Activated CD8-positive, alpha-beta T cell treated with anti-CD3 and anti-CD28 coated beads, Interleukin-2, amount 10 ng/mL, durations not matched to agents 7 days and 5 days (primary cell): ENCODE measurements at regions of chr1 and their contacts with region 1.

Region 1: DNA sequence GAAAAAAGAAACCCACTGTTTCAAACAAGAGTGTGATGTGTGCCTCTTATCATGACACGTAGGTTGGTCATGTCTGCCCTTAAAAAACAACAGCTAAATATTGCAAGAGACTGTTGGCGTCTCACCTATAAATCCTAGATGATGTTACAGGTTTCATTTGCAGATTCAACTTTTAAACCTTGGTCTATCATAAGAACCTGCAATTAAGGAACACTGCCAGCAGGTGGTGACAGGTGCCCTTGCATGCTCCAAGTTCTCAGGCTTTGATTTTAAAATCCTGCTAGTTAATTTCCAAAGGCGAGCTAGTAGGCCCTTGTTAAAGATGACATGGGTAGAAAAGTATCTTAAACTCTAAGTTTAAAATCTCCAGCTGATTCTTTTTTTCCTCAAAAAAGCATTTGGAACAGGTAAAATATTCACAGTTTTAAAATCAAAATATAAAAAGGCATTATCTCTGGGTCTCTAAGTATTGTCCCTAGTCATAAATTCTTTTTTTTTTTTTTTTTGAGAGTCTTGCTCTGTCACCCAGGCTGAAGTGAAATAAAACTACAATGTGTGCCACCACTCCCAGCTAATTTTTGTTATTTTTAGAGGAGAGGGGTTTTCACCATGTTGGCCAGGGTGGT is 39.1 kb downstream of the CLSTN1 start:
- DNase-seq: peak; percentile 83
- ATAC-seq: peak; percentile 53
- H3K4me3 Mint-ChIP-seq: no peak overlapping the region
- H3K27ac Mint-ChIP-seq: no peak overlapping the region
- H3K4me1 Mint-ChIP-seq: peaks cover 47% of the 10 kb centered on the region
- H3K27me3 Mint-ChIP-seq: no peaks in the 10 kb centered on the region

Region 2: GRCh38 chr1:9746211-9746610 is 38.4 kb before region 1 on chr1:
- CTCF ChIA-PET with region 1: no interaction called
- POLR2A ChIA-PET with region 1: no interaction called
- DNase-seq: no peak
- ATAC-seq: no peak
- H3K4me3 Mint-ChIP-seq: no peak overlapping the region
- H3K27ac Mint-ChIP-seq: no peak overlapping the region
- H3K4me1 Mint-ChIP-seq: no peaks in the 10 kb centered on the region
- H3K27me3 Mint-ChIP-seq: no peaks in the 10 kb centered on the region

Region 3: DNA sequence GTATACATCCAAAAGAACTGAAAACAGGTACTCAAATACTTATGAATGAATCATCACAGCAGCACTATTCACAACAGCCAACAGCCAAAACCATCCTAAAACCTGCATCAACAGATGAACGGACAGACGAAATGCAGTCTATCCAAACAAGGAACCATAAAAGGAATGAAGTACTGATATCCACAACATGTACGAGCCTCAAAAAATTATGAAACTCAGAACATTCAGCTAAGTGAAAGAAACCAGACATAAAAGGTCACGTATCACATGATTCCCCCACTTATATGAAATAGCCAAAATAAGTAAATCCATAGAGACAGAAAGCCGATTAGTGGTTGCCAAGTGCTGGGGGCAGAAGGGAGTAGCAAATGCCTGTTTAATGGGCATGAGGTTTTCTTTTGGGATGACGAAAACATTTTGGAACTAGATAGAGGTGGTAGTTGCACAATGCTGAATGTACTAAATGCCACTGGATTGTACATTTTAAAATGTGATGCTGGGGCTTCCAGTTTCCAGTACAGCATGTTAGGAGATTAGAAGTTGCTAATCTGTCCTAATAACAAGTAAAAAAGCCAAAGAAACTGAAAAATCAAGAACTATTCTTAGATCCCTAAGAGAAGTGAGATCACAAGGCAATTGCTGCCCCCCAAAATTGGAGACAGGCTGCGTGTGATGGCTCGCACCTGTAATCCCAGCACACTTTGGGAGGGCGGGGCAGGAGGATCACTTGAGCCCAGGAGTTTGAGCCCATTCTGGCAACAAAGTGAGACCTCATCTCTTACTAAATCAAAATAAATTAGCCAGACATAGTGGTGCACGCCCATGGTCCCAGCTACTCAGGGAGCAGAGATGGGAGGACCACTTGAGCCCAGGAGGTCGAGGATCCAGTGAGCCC is 13.9 kb after region 1 on chr1:
- CTCF ChIA-PET with region 1: interaction called, 29 read pairs
- POLR2A ChIA-PET with region 1: interaction called, 4 read pairs
- DNase-seq: no peak
- ATAC-seq: no peak
- H3K4me3 Mint-ChIP-seq: peak overlapping the region; percentile 25
- H3K27ac Mint-ChIP-seq: peak overlapping the region; percentile 63
- H3K4me1 Mint-ChIP-seq: peaks cover 68% of the 10 kb centered on the region
- H3K27me3 Mint-ChIP-seq: no peaks in the 10 kb centered on the region

Region 4: GRCh38 chr1:9823943-9824701 is 39.5 kb after region 1 on chr1 and contains the start of gene CLSTN1:
- CTCF ChIA-PET with region 1: interaction called, 31 read pairs
- POLR2A ChIA-PET with region 1: no interaction called
- DNase-seq: peak; percentile 94
- ATAC-seq: peak; percentile 81
- H3K4me3 Mint-ChIP-seq: peak within 1 kb of the TSS; percentile 98
- H3K27ac Mint-ChIP-seq: peak within 1 kb of the TSS; percentile 92
- H3K4me1 Mint-ChIP-seq: peaks cover 49% of the 10 kb centered on the region
- H3K27me3 Mint-ChIP-seq: no peaks in the 10 kb centered on the region
- total RNA-seq, gene CLSTN1: 91.1 to 96.8 TPM

Region 5: DNA sequence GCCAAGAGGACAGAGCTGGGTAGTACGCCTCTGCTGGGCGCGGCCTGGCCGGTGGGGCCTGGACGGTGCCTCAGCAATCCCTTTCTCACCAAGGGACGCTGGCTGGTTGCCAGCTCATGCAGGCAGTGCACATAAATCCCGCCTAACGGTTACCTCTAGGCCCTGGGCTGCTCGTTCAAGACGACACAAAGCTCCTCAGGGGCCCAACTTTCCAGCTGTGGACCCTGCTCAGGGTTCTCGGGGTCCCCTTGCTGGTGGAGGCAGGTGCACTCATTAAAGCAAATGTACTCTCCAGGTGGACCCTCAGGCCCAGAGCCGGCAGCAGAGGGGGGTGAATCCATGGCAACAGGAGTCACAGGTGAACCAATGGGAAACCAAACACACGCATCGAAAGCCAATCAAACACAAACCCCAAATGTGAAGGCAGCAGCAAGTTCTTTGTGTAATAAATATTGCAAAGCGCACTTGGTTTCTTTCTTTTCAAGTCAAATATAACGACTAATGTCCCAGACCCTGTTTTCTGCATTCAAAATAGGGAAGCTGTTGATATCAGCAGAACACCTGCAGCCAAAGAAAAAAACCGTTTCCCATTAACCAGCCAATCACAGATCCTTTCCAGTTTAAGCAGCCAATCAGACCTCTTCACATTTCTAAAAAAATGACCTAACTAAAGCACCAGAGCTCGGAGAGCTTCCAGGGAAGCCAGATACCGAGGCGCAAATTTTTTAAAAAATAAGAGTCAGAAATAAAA is 65.2 kb after region 1 on chr1:
- CTCF ChIA-PET with region 1: interaction called, 14 read pairs
- POLR2A ChIA-PET with region 1: no interaction called
- DNase-seq: no peak
- ATAC-seq: peak; percentile 47
- H3K4me3 Mint-ChIP-seq: peak overlapping the region; percentile 34
- H3K27ac Mint-ChIP-seq: no peak overlapping the region
- H3K4me1 Mint-ChIP-seq: peaks cover 12% of the 10 kb centered on the region
- H3K27me3 Mint-ChIP-seq: no peaks in the 10 kb centered on the region

Region 6: GRCh38 chr1:9867408-9868243 is 83.0 kb after region 1 on chr1:
- CTCF ChIA-PET with region 1: interaction called, 264 read pairs
- POLR2A ChIA-PET with region 1: no interaction called
- DNase-seq: peak; percentile 92
- ATAC-seq: peak; percentile 97
- H3K4me3 Mint-ChIP-seq: no peak overlapping the region
- H3K27ac Mint-ChIP-seq: no peak overlapping the region
- H3K4me1 Mint-ChIP-seq: peaks cover 14% of the 10 kb centered on the region
- H3K27me3 Mint-ChIP-seq: no peaks in the 10 kb centered on the region

Region 7: DNA sequence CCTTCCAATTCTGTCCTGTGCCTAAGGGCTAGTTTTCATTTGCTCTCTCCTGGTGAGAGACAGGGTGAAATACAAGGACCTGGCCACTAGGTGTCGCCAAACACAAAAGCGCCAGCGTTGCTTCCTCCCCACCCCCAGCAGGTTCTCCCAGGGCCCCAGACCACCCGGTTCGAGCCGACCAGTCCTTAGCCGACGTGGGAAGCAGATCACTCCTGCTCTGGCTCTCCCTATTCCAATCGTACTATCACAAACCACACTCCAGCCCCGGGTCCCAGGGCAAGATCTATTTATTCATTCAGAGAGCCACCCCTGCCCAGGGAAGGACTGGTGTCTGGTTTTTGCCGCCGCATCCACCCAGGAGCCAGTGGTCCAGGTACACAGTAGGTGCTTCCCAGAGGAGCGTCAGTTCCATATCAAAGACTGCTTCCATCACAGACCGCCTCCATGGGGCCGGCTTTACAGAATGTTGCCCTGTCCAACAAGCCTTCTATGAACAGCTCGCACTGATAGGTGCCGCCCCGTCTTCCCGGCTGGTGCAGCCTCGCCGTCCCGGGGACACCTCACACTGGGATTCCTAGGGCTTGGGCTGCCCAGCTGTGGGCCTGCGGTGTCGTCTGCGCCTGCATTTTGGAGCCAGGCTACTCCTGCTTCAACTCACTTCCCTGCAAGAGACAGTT is 90.5 kb after region 1 on chr1:
- CTCF ChIA-PET with region 1: interaction called, 264 read pairs
- POLR2A ChIA-PET with region 1: no interaction called
- DNase-seq: peak; percentile 84
- ATAC-seq: peak; percentile 94
- H3K4me3 Mint-ChIP-seq: no peak overlapping the region
- H3K27ac Mint-ChIP-seq: peak overlapping the region; percentile 50
- H3K4me1 Mint-ChIP-seq: peaks cover 19% of the 10 kb centered on the region
- H3K27me3 Mint-ChIP-seq: no peaks in the 10 kb centered on the region